ENCODE measurements at regions of chr10 and their contacts with region 1.

Region 1: DNA sequence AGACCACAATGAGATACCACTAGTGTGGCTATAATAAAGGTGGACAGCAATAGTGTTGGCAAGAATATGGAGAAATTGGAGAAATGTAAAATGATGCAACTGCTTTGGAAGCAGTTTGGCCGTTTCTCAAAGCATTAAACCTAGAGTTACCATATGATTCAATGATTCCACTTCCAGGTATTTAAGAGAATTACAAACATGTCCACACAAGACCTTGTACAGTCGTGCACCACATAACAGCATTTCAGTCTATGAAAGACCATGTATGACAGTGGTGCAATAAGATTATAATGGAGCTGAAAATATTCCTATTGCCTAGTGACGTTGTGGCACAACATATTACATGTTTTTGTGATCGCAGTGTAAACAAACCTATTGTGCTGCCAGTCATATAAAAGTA is 29.6 kb downstream of the CCDC172 start:
- DNase-seq: no peak
- H3K4me3 ChIP-seq: no peak overlapping the region
- H3K27ac ChIP-seq: no peak overlapping the region
- H3K4me1 ChIP-seq: no peaks in the 10 kb centered on the region
- H3K27me3 ChIP-seq: peaks cover 31% of the 10 kb centered on the region
- CTCF ChIP-seq: no peak

Region 2: GRCh38 chr10:115355162-115355760 is 998.6 kb before region 1 on chr10:
- CTCF ChIA-PET with region 1: no interaction called
- POLR2A ChIA-PET with region 1: no interaction called
- intact Hi-C with region 1: no loop called
- DNase-seq: peak; percentile 70
- H3K4me3 ChIP-seq: no peak overlapping the region
- H3K27ac ChIP-seq: no peak overlapping the region
- H3K4me1 ChIP-seq: no peaks in the 10 kb centered on the region
- H3K27me3 ChIP-seq: peaks cover 6% of the 10 kb centered on the region
- CTCF ChIP-seq: peak; percentile 74

Region 3: GRCh38 chr10:116069856-116070255 is 284.0 kb before region 1 on chr10:
- CTCF ChIA-PET with region 1: interaction called, 10 read pairs
- POLR2A ChIA-PET with region 1: no interaction called
- intact Hi-C with region 1: no loop called
- DNase-seq: no peak
- H3K4me3 ChIP-seq: no peak overlapping the region
- H3K27ac ChIP-seq: no peak overlapping the region
- H3K4me1 ChIP-seq: no peaks in the 10 kb centered on the region
- H3K27me3 ChIP-seq: peaks cover 43% of the 10 kb centered on the region
- CTCF ChIP-seq: no peak

Region 4: GRCh38 chr10:116708391-116708821 is 354.6 kb after region 1 on chr10:
- CTCF ChIA-PET with region 1: no interaction called
- POLR2A ChIA-PET with region 1: no interaction called
- intact Hi-C with region 1: no loop called
- DNase-seq: no peak
- H3K4me3 ChIP-seq: no peak overlapping the region
- H3K27ac ChIP-seq: no peak overlapping the region
- H3K4me1 ChIP-seq: no peaks in the 10 kb centered on the region
- H3K27me3 ChIP-seq: no peaks in the 10 kb centered on the region
- CTCF ChIP-seq: no peak

Measured in A673 (cell line).